GM10248 (cell line): ENCODE measurements at regions of chr10 and their contacts with region 1.

Region 1: DNA sequence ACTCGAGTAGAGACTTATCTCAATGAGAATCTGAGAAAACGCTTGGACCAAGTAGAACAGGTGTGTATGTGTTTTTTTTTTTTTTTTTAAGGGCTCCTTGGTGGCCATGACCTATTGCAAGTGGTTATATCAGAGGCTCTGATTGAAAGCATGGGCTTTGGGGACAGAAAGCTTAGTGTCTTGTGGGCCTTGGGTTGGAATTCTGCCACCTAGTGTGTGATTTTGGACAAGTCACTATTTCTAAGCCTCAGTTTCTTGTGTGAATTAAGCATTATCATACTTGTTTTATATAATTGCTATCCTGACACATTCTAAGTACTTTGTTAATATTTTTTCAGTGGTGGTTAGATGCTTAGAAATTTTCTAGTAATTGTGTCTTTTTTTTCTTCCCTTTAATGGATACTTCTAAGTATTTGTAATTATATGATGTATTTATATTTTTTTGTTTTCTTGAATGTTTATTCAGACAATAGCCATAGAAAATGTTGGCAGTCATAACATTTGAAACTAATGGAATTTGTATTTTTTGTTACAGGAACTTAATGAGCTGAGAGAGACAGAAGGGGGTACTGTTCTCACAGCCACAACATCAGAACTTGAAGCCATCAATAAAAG is 33.1 kb downstream of the SMC3 start:
- DNase-seq: no peak
- CTCF ChIP-seq: peak; percentile 52

Region 2: DNA sequence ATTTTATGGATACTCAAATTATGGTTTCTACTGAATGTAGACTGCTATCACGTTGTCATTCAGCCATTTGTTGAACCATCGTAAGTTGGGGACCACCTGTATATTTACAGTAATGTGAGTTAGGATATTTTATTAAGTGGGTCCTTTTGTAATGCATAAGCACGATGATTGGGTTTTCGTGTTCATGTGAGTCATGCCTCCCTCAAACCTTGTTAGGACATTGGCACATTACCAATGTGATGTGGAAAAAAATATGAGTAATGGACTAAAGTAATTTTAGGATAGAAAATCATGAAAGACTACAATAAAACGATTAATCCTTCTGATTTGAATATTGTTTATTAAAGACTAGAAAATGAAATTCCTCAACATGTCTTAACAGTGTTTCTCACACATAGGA is 24.4 kb before region 1 on chr10:
- CTCF ChIA-PET with region 1: interaction called, 10 read pairs
- POLR2A ChIA-PET with region 1: interaction called, 3 read pairs
- DNase-seq: no peak
- CTCF ChIP-seq: no peak

Region 3: DNA sequence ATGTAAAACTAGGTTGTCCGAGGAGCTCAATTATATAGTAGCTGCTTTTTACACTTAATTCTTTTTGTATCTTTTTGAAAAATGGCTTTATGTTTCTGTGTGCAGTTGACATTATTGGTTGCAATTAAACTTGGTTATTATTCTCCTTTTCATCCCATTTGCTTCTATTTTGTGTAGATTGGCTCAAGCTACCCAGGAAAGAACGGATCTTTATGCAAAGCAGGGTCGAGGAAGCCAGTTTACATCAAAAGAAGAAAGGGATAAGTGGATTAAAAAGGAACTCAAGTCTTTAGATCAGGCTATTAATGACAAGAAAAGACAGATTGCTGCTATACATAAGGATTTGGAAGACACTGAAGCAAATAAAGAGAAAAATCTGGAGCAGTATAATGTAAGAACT is 16.6 kb before region 1 on chr10:
- CTCF ChIA-PET with region 1: interaction called, 13 read pairs
- POLR2A ChIA-PET with region 1: interaction called, 3 read pairs
- DNase-seq: no peak
- CTCF ChIP-seq: no peak

Region 4: GRCh38 chr10:110625356-110625894 is 24.8 kb after region 1 on chr10:
- CTCF ChIA-PET with region 1: no interaction called
- POLR2A ChIA-PET with region 1: no interaction called
- DNase-seq: no peak
- CTCF ChIP-seq: no peak